ENCODE measurements at regions of chr22 and their contacts with region 1.

Region 1: DNA sequence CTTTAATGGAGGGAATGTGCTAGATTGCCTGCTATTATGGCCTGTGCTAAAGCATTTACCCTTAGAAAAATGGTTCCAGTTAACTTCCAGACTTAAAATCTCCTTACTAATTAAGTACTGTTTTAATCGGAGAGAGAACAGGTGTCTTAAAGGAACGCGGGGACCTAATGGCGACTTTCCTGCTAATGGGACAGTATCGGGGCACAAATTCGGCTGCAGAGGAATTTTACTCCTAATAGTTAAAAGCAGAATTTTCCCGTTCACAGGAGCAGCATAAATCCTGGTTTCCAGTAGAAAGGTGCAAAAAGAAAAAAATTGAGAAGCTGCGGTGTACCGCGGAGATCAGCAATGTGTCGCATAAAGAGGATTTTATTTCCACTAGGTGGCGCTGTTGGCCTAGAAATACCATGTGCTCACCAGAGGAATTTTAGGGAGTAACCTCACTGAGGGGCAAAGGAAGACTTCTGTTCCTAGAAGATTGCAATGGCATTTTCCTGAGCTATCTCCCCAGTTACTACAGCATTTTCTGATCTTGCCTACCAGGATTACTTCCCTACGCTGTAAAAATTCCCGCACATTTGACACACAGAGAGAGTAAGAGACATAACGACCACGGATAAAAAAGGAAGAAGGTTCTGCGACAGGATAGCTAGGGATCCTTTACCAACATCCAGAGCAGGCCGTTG is 44.5 kb downstream of the ZNF280B start:
- DNase-seq: peak; percentile 84
- H3K4me3 ChIP-seq: peak overlapping the region; percentile 27
- H3K27ac ChIP-seq: no peak overlapping the region
- H3K4me1 ChIP-seq: peaks cover 20% of the 10 kb centered on the region
- CTCF ChIP-seq: peak; percentile 94

Region 2: DNA sequence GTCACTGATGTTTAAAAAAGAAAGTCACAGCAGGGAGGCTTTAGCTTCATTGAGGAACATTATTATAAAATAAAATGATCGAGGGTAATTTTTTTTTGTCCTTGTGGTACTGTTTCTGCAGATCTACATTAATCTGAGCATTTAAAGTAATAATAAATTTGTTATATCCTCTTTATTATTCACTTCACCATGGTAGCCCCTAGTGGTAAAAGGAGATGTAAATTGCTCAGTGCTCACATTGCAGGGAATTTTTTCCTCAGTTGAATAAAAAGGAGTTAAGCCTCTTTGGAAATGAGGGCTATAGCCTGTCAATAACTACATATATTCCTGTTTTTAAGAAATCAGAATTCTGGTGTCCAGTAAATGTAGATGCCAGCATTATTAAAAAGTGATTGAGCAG is 319.1 kb before region 1 on chr22:
- CTCF ChIA-PET with region 1: no interaction called
- POLR2A ChIA-PET with region 1: no interaction called
- intact Hi-C with region 1: no loop called
- DNase-seq: no peak
- H3K4me3 ChIP-seq: no peak overlapping the region
- H3K27ac ChIP-seq: no peak overlapping the region
- H3K4me1 ChIP-seq: no peaks in the 10 kb centered on the region
- CTCF ChIP-seq: peak; percentile 55

Region 3: DNA sequence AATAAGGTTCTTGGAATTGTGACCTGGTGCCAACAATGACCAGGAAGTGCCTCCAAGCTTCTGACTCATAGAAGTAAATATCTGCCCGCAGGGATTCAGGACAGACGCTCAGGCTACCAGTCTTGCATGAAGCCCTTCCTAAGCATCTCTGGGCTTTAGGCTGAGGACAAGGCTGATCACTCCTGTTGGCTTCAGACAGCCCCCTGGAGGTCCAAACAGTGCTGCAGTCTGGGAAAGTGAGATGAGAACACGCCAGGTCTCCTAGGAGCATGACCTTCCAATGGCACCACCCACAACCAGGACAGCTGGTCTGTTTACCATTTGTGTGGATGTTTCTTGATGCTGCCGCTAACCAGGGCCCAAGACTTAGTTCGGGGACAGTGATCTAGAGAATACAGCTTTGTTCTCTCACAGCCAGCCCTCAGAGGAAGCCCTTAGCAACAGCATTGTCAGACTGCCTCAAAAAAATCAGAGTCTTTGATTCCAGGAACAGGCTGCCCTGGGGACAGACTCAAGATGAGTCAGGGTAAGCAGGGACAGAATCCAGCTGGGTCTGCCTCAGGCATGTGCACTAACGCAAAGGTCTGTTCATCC is 66.6 kb before region 1 on chr22:
- CTCF ChIA-PET with region 1: no interaction called
- POLR2A ChIA-PET with region 1: no interaction called
- intact Hi-C with region 1: no loop called
- DNase-seq: peak; percentile 34
- H3K4me3 ChIP-seq: no peak overlapping the region
- H3K27ac ChIP-seq: no peak overlapping the region
- H3K4me1 ChIP-seq: peaks cover 71% of the 10 kb centered on the region
- CTCF ChIP-seq: peak; percentile 54

Region 4: DNA sequence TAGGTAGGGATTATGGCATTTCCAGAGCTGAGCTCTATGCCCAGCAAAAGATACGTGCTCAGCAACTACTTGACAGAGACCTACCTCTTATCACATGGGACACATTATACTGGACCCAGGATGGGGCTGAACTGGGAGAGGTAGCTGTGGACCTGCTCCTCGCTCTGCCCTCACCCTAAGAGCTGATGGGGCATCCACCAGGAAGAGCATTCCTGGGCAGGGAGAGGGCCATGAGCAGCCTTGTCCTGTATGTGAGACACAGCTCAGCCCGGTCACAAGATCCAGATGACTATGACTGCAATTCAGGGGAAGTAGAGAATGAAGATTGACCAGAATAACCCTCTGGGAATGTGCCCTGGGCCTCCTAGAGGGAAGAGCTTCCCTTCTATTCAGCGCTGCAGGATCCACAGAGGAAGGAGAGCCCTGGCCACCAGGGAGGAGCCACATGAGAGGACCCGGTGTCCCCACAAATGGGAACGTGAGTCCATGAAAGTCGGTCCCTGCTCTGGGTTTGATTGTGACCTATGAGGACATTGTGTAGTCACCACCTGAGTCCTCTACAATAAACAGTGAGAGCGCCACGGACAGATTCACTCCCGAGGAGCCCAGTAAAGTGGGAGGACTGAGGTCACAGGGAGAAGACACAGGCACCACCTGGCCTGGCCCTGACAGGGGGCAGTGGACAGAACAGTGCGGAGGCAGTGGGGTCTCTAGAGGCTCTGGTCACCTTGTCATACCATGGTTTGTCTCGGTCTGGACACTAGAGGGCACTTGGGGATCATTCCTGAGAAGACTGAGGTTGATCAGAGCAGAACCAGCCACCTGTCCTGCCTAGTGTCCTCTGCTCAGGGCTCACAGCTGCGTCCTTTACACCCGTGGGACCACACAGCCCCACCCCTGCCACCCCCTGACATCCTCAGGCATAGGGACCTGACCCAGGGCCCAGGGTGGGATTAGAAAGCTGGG is 55.0 kb before region 1 on chr22:
- CTCF ChIA-PET with region 1: interaction called, 3 read pairs
- POLR2A ChIA-PET with region 1: no interaction called
- intact Hi-C with region 1: loop called (anchors 1 kb)
- DNase-seq: peak; percentile 87
- H3K4me3 ChIP-seq: no peak overlapping the region
- H3K27ac ChIP-seq: peak overlapping the region; percentile 59
- H3K4me1 ChIP-seq: peaks cover 64% of the 10 kb centered on the region
- CTCF ChIP-seq: peak; percentile 85

Region 5: DNA sequence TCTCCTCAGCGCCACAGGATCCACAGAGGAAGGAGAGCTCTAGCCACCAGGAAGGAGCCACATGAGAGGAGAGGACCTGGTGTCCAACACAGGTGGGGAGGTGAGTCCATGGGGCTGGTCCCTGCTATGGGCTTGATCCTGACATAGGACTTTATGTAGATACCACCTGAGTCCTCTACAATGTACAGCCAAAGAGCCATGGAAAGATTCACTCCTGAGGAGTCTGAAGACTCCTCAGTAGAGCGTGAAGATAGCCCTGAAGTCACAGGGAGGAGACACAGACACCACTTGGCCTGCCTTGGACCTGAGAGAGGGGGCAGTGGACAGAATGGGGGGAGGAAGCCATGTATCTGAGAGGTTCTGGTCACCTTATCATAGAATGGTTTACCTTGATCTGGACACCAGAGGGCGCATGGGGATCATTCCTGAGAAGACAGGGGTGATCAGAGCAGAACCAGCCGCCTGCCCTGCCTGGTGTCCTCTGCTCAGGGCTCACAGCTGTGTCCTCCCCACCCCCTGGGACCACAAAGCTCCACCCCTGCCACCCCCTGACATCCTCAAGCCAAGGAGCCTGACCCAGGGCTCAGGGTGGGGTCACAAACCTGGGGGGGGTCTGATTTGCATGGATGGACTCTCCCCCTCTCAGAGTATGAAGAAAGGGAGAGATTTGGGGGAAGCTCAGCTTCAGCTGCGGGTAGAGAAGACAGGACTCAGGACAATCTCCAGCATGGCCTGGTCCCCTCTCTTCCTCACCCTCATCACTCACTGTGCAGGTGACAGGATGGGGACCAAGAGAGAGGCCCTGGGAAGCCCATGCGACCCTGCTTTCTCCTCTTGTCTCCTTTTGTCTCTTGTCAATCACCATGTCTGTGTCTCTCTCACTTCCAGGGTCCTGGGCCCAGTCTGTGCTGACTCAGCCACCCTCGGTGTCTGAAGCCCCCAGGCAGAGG is 32.5 kb before region 1 on chr22:
- CTCF ChIA-PET with region 1: no interaction called
- POLR2A ChIA-PET with region 1: no interaction called
- intact Hi-C with region 1: loop called (anchors 1 kb)
- DNase-seq: peak; percentile 90
- H3K4me3 ChIP-seq: no peak overlapping the region
- H3K27ac ChIP-seq: no peak overlapping the region
- H3K4me1 ChIP-seq: peaks cover 54% of the 10 kb centered on the region
- CTCF ChIP-seq: peak; percentile 83

Region 6: DNA sequence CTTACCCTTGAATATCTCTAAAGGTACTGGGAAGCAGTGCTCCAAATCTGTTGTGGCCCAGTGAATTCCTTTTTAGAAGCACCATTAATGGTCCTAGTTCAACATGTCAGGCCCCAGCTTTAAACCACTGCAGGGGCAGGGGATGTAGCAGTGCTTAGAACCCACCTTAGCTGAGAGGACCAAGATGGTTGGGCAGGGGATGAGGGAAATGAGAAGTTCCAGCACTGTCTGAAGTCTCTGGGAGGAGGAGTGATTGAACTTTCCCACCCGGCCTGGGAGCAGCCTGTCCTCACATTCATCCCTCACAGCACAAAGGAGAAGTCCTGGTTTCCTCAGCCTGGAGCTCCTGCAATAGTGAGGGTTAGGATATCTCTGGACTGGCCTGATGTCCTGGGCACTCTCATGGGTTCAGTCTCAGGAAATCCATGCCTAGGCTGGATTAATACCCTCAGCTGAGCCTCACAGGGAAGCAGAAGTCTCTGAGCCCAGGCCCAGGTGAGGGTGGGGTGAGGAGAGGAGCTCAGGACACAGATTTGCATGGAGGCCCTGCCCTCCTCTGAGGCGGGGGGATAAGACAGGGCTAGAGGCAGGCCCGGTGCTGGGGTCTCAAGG is 123.7 kb after region 1 on chr22:
- CTCF ChIA-PET with region 1: no interaction called
- POLR2A ChIA-PET with region 1: no interaction called
- intact Hi-C with region 1: loop called (anchors 5 kb)
- DNase-seq: no peak
- H3K4me3 ChIP-seq: no peak overlapping the region
- H3K27ac ChIP-seq: no peak overlapping the region
- H3K4me1 ChIP-seq: peaks cover 29% of the 10 kb centered on the region
- CTCF ChIP-seq: no peak

Region 7: GRCh38 chr22:22770280-22770871 is 306.4 kb after region 1 on chr22:
- CTCF ChIA-PET with region 1: no interaction called
- POLR2A ChIA-PET with region 1: interaction called, 3 read pairs
- intact Hi-C with region 1: loop called (anchors 10 kb)
- DNase-seq: peak; percentile 59
- H3K4me3 ChIP-seq: no peak overlapping the region
- H3K27ac ChIP-seq: no peak overlapping the region
- H3K4me1 ChIP-seq: peaks cover 20% of the 10 kb centered on the region
- CTCF ChIP-seq: peak; percentile 93

Measured in OCI-LY7 (cell line).